Endothelial cell of umbilical vein (primary cell): ENCODE measurements at regions of chr19 and their contacts with region 1.

Region 1: DNA sequence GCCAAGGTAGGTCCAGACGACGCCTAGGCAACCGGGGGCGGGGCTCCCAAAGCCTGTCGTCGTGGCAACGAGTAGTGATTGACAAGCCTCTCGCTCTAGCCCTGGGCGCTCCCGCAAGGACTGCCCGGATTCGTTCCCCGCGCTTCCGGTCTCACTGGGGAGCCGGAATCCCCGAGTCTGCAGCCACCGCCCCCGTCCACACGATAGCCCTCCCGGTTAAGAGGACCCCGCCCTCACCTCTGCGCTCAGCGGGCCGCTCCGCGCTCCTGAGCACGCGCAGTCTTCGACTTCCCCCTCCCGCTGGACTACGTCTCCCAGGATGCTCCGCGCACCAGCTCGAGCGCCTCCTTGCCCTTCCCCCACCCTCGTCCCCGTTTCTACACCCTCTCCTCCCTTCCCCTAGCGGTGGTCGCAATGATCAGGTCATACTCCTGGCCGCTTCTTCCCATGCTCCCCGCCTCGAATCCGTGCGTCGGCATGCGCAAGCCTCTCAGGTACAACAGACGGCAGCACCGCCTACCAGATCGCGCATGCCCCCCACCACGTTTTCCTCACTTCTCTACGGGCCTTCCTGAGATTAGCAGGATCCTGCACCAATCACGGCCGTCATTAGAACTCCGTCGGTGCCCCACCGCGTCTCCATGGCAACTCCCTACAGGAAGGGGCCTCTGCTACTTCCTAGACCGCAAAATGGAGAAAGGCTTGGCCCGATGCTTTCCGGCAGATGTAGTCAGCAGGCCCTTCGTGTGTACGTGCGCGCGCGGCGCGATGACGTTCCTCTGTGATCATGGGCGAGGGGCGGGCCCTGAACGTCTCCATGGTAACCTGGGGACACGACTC is at the start of gene MZF1:
- DNase-seq: peak; percentile 100
- H3K4me3 ChIP-seq: peak within 1 kb of the TSS; percentile 7 to 70 (median 58)
- H3K27ac ChIP-seq: peak within 1 kb of the TSS; percentile 85
- H3K4me1 ChIP-seq: peaks cover 16% of the 10 kb centered on the region
- H3K27me3 ChIP-seq: no peaks in the 10 kb centered on the region
- CTCF ChIP-seq: peak; percentile 6 to 23
- POLR2A ChIP-seq: no peak
- total RNA-seq, gene MZF1: 18.8 and 26.4 TPM in 2 replicates

Region 2: GRCh38 chr19:58278157-58279041 is 294.6 kb before region 1 on chr19 and contains the start of gene ZNF8:
- CTCF ChIA-PET with region 1: no interaction called
- POLR2A ChIA-PET with region 1: interaction called, 6 read pairs
- dilution Hi-C with region 1: no loop called
- intact Hi-C with region 1: loop called (anchors 1 kb)
- DNase-seq: peak; percentile 99
- H3K4me3 ChIP-seq: peak within 1 kb of the TSS; percentile 67 to 72 (median 70)
- H3K27ac ChIP-seq: peak within 1 kb of the TSS; percentile 76
- H3K4me1 ChIP-seq: peaks cover 8% of the 10 kb centered on the region
- H3K27me3 ChIP-seq: no peaks in the 10 kb centered on the region
- CTCF ChIP-seq: peak in 1 of 2 donors; percentile 22
- POLR2A ChIP-seq: peak; percentile 68
- total RNA-seq, gene ZNF8: 6.3 and 6.8 TPM in 2 replicates

Region 3: DNA sequence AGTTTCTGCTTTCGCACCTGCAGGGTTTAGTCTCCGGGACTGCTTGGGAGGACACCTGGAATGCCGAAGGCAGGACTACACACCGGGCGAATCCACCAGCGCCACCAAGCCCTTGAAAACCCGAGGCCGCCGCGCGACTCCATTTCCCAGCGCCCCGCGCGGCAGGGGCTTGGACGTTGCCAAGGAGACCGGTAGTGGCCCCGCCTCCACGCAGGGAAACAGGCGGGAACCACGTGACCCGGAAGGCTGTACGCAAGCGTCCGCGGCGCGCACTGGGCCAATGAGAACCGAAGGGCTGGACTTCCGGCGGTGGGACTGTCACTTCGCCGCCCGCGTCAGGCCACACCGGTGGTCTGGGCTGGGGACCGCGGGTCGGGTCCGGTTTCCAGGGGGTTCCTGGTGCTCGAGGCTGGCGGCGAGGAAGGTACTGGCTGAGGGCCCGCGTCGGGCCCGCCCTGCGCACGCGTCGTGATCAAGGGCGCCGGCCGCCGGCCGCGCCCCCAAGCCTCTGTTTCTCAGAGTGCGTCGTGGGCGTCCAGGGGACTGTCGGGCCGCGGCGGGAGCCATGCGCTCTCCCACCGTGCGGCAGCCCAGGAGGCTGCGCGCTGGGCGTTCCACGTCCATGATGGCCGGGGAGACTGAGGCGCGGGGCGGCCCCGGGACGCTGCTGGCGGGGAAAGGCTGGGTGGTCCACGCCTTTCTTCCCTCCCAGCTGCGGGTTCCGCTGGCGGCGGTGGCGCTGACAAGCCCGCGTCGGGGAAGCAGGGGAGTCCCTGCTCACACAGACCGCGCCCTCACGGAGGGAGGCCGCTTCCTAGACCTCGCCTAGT is 106.1 kb before region 1 on chr19 and contains the start of gene ZNF324:
- CTCF ChIA-PET with region 1: no interaction called
- POLR2A ChIA-PET with region 1: no interaction called
- dilution Hi-C with region 1: no loop called
- intact Hi-C with region 1: no loop called
- DNase-seq: peak; percentile 96
- H3K4me3 ChIP-seq: peak within 1 kb of the TSS; percentile 62 to 76 (median 72)
- H3K27ac ChIP-seq: peak within 1 kb of the TSS; percentile 45
- H3K4me1 ChIP-seq: peaks cover 3% of the 10 kb centered on the region
- H3K27me3 ChIP-seq: no peaks in the 10 kb centered on the region
- CTCF ChIP-seq: no peak
- POLR2A ChIP-seq: peak; percentile 76
- total RNA-seq, gene ZNF324: 7.1 and 8.7 TPM in 2 replicates

Region 4: DNA sequence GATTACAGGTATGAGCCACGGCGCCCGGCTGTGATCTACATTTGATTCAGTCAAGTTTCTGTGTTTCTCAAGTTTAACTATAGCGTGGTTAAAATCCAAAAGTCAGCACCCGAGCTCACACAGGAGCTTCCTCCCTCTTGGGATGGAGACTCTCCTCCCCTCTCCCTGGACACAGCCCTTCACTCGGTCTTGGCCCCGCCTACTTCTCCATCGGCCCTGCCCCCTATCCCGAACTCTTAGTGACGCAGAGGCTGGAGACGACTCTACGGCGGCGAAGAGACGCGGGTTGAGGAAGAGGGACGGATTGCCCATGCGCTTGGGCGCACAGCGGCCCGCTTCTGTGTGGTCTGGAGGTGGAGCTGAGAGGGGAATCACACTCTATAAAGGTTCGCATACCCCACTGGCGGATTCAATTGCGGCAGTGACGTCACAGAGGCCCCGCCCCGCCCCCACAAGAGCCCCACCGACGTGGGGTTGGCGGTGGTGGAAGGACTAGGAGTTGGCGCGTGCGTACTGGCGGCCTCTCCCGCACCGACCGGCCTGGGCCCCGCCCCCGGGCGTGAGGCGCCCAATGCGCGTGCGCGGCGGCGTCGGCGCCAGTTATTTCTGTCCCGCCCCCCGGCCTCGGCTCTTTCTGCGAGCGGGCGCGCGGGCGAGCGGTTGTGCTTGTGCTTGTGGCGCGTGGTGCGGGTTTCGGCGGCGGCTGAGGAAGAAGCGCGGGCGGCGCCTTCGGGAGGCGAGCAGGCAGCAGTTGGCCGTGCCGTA is 29.0 kb before region 1 on chr19 and contains the start of gene TRIM28:
- CTCF ChIA-PET with region 1: interaction called, 8 read pairs
- POLR2A ChIA-PET with region 1: interaction called, 9 read pairs
- dilution Hi-C with region 1: no loop called
- intact Hi-C with region 1: loop called (anchors 1 kb)
- DNase-seq: peak; percentile 99
- H3K4me3 ChIP-seq: peak within 1 kb of the TSS; percentile 82 to 94 (median 85)
- H3K27ac ChIP-seq: peak within 1 kb of the TSS; percentile 87
- H3K4me1 ChIP-seq: peaks cover 15% of the 10 kb centered on the region
- H3K27me3 ChIP-seq: peaks cover 8 to 10% of the 10 kb centered on the region in 2 experiments
- CTCF ChIP-seq: no peak
- POLR2A ChIP-seq: peak; percentile 83
- total RNA-seq, gene TRIM28: 377 and 429 TPM in 2 replicates

Region 5: DNA sequence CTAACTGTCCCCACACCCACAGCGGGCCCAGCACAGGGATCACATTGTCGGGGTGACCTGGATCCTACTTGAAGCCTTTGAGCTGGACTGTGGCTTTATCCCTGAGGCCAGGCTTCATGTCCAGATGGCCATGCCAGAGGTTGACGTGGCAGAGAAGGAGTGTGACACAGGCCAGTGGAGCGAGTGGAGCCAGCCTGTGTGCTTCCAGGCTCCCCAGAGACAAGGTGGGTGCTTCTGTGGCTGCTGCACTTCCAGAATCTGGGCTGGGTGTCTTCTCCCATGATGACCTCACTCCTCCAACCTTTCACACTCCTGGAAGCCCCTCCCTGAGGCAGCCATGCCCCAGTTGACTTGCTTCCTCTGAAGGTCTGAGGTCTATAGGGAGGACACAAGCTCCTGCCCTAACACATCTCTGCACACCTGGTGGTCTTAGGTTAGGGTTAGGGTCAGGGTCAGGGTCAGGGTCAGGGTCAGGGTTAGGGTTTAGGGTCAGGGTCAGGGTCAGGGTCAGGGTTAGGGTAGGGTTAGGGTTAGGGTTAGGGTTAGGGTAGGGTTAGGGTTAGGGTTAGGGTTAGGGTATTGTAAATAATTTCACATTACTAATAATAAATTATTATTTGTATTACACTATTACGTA is 13.2 kb after region 1 on chr19:
- CTCF ChIA-PET with region 1: no interaction called
- POLR2A ChIA-PET with region 1: no interaction called
- dilution Hi-C with region 1: no loop called
- intact Hi-C with region 1: no loop called
- DNase-seq: no peak
- H3K4me3 ChIP-seq: no peak overlapping the region
- H3K27ac ChIP-seq: no peak overlapping the region
- H3K4me1 ChIP-seq: no peaks in the 10 kb centered on the region
- H3K27me3 ChIP-seq: no peaks in the 10 kb centered on the region
- CTCF ChIP-seq: no peak
- POLR2A ChIP-seq: no peak